ENCODE measurements at regions of chr9 and their contacts with region 1.

Region 1: DNA sequence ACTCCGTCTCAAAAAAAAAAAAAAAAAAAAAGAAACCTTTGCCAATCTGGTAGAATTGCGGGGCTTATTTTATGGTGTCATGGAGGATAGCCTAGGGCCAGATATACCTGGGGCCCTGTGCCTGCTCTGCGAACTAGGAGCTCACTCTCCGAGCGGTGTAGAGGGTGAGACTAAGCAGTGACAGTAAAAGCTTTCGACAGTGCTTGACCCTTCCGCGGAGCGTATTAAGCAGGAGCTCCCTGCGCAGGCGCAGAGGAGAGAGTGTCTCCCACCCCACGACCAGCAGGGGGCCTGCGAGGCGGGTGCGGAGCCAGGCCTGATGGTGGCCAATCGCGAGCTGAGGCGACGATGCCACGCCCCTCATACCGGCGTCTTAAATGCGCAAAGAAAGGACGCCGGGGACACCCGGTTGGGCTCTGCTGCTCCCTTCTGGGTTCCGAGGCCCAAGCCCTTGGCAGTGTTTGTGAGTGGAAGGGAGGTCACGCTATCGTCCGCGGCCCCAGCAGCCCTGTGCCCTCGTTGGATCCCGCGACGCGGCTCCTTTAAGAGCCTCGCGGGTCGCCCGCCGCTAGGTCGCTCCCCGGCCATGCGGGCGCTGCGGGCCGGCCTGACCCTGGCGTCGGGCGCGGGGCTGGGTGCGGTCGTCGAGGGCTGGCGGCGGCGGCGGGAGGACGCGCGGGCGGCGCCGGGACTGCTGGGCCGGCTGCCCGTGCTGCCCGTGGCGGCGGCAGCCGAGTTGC is at the start of gene ENDOG:
- DNase-seq: peak; percentile 98
- ATAC-seq: peak; percentile 98
- H3K4me3 Mint-ChIP-seq: peak within 1 kb of the TSS; percentile 76
- H3K27ac Mint-ChIP-seq: peak within 1 kb of the TSS; percentile 80
- H3K4me1 Mint-ChIP-seq: peaks cover 13% of the 10 kb centered on the region
- H3K27me3 Mint-ChIP-seq: no peaks in the 10 kb centered on the region
- total RNA-seq, gene ENDOG: 7.3 to 9.3 TPM

Region 2: DNA sequence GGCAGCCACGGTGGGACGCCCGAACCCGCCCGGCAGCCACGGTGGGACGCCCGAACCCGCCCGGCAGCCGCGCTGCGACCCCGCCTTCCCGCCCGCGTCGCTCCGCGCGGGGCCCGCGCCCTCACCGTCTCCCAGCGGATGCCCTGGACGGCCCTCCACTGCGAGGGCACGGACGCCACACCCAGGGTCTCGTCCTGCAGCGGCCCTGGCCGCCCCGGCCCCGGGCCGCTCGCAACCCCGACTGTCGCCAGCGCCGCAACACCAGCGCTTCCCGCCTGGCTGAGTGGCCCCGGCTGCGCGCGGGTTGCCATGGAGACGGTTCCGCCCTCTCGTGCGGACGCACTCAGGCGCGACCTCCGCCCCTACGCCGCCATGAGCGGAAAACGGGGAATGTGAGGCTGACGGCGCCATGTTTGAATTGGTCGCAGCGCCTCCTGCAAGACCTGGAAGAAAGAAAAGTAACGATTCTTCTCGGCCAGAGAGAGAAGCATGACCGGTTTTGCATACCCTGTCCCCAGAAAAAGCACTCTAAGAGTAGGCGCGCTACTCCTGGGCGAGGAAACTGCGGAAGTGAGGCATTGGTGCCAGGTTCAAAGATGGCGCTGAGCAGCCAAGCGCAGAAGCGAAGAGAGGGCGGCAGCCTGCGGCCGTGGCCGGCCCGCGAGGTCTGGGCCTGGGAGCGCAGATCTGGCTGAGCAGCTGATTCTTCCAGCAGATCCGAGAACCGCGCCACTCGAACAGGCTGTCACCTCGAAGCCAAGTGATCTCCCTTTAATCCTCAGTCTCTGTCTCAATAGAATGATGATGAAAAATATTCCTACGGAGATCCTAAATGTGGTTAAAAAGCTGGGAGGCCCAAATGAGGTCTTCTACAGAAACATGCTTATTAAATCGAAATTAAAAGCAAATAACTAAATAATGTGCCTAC is 161.6 kb before region 1 on chr9 and contains the start of gene DYNC2I2:
- CTCF ChIA-PET with region 1: no interaction called
- POLR2A ChIA-PET with region 1: no interaction called
- intact Hi-C with region 1: loop called in 1 of 2 experiments (anchors 2 kb)
- DNase-seq: peak; percentile 99
- ATAC-seq: peak; percentile 98
- H3K4me3 Mint-ChIP-seq: peak within 1 kb of the TSS; percentile 82
- H3K27ac Mint-ChIP-seq: peak within 1 kb of the TSS; percentile 100
- H3K4me1 Mint-ChIP-seq: peaks cover 6% of the 10 kb centered on the region
- H3K27me3 Mint-ChIP-seq: no peaks in the 10 kb centered on the region
- total RNA-seq, gene DYNC2I2: 26.7 to 35.7 TPM

Region 3: DNA sequence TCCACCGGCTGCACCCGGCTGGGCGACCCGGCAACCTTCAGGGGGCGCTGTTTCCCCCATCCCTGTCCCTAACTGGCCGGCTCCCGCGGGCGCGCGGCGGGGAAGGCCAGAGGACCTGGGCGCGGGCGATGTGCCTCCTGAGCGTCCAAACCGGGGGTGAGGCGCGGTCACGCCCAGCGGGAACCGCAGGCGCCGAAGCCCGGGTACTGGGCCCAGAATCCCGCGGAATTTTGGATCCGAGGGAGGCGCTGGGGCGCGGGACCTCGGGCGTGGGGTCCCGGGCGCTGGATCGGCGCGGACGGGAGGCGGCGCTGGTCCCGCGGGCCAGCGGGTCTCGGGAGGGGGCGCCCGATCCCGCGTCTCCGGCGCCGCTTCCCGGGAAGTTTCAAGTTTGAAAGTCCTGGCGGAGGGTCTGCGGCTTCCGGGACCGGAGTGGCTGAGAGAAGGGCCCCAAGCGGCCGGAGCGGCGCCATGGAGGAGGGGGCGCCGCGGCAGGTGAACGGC is 115.8 kb before region 1 on chr9 and contains the start of gene PKN3:
- CTCF ChIA-PET with region 1: interaction called, 7 read pairs
- POLR2A ChIA-PET with region 1: interaction called, 3 read pairs
- intact Hi-C with region 1: loop called in 1 of 2 experiments (anchors 1 kb)
- DNase-seq: peak; percentile 95
- ATAC-seq: peak; percentile 85
- H3K4me3 Mint-ChIP-seq: peak within 1 kb of the TSS; percentile 73
- H3K27ac Mint-ChIP-seq: peak within 1 kb of the TSS; percentile 74
- H3K4me1 Mint-ChIP-seq: peaks cover 10% of the 10 kb centered on the region
- H3K27me3 Mint-ChIP-seq: no peaks in the 10 kb centered on the region
- total RNA-seq, gene PKN3: 14.6 to 14.9 TPM

Region 4: DNA sequence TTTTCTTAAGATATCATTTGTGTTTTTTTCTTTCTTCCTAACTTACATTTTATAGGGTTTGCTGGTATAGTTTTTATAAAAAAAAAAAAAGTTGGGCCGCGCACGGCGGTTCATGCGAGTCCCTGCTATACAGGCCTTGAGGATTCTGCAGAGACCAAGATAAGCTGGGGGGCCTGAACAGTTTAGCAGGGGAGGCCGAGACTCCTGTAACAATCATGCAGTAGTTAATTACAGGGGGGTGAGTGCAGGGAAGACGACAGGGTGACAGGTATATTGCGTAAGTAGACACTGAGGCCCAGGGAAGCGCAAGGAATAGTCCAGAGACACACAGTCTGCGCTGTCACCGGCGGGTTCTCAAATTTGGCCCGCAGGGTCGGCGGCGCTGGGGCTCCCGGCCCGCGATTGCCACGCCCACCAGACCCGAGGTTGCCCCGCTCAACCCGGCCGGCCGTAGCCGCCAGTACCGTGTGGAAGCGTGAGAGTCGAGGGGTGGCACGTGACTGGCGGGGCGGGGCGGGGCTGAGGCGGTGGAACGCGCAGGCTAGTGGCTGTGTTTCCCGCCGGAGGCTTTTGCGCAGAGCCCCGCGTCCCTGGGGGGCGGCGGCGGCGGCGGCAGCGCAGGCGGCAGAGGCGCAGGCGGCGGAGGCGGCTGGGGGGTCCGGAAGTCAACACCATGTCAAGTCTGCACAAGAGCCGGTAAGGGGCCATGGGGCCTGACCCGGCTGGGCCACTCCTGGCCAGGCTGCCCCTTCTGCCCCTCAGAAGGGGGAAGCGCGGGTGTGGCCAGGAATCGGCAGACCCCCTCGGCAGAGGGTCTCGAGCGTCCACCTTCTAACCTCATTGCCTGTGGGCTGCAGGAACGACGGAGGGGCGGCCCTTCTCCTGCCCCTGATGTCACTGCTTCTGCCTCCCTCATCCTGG is 31.3 kb before region 1 on chr9 and contains the start of gene TBC1D13:
- CTCF ChIA-PET with region 1: interaction called, 10 read pairs
- POLR2A ChIA-PET with region 1: interaction called, 5 read pairs
- intact Hi-C with region 1: loop called in 1 of 2 experiments (anchors 1 kb)
- DNase-seq: peak; percentile 94
- ATAC-seq: peak; percentile 97
- H3K4me3 Mint-ChIP-seq: peak within 1 kb of the TSS; percentile 87
- H3K27ac Mint-ChIP-seq: peak within 1 kb of the TSS; percentile 87
- H3K4me1 Mint-ChIP-seq: peaks cover 18% of the 10 kb centered on the region
- H3K27me3 Mint-ChIP-seq: no peaks in the 10 kb centered on the region
- total RNA-seq, gene TBC1D13: 10.5 to 14.0 TPM

Region 5: GRCh38 chr9:128927731-128928411 is 109.6 kb after region 1 on chr9:
- CTCF ChIA-PET with region 1: interaction called, 7 read pairs
- POLR2A ChIA-PET with region 1: no interaction called
- intact Hi-C with region 1: loop called in 1 of 2 experiments (anchors 1 kb)
- DNase-seq: peak; percentile 73
- ATAC-seq: peak; percentile 81
- H3K4me3 Mint-ChIP-seq: no peak overlapping the region
- H3K27ac Mint-ChIP-seq: peak overlapping the region; percentile 6
- H3K4me1 Mint-ChIP-seq: peaks cover 9% of the 10 kb centered on the region
- H3K27me3 Mint-ChIP-seq: no peaks in the 10 kb centered on the region

Region 6: DNA sequence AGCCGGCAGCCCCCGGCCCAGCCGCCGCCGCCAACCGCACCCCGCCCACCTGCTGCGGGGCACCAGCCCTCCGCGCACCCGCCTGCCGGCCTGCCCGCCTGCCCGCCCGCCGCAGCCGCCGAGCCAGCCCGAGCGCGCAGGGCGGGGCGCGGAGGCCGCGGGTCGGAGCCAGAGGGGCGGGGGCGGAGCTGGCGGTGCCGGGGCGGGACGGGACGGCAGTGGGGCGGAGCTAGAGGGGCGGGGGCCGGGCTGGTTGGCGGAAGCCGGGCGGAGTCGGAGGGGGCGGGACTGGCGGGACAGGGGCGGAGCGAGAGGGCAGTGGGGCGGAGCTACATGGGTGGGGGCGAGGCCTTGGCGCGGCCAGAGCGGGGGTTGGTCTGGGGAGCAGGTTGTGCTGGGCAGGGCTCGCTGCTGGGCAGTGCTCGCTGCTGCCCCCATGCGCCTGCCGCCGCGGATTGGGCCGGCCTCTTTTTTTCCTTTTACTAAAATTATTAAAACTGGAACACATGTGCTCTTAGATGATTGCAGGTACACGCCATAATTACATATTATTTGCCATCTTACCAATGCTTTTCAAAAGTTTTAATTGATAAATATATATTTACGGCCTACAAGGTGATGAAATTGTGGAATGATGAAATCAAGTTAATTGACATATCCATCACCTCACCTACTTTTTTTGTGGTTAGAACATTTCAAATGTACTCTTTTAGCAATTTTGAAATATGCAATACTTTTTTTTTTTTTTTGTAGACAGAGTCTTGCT is 210.1 kb after region 1 on chr9 and contains the start of gene SH3GLB2:
- CTCF ChIA-PET with region 1: interaction called, 4 read pairs
- POLR2A ChIA-PET with region 1: no interaction called
- intact Hi-C with region 1: loop called in 1 of 2 experiments (anchors 1 kb)
- DNase-seq: peak; percentile 98
- ATAC-seq: peak; percentile 93
- H3K4me3 Mint-ChIP-seq: peak within 1 kb of the TSS; percentile 81
- H3K27ac Mint-ChIP-seq: peak within 1 kb of the TSS; percentile 52
- H3K4me1 Mint-ChIP-seq: peaks cover 17% of the 10 kb centered on the region
- H3K27me3 Mint-ChIP-seq: no peaks in the 10 kb centered on the region
- total RNA-seq, gene SH3GLB2: 49.1 to 53.7 TPM

Region 7: DNA sequence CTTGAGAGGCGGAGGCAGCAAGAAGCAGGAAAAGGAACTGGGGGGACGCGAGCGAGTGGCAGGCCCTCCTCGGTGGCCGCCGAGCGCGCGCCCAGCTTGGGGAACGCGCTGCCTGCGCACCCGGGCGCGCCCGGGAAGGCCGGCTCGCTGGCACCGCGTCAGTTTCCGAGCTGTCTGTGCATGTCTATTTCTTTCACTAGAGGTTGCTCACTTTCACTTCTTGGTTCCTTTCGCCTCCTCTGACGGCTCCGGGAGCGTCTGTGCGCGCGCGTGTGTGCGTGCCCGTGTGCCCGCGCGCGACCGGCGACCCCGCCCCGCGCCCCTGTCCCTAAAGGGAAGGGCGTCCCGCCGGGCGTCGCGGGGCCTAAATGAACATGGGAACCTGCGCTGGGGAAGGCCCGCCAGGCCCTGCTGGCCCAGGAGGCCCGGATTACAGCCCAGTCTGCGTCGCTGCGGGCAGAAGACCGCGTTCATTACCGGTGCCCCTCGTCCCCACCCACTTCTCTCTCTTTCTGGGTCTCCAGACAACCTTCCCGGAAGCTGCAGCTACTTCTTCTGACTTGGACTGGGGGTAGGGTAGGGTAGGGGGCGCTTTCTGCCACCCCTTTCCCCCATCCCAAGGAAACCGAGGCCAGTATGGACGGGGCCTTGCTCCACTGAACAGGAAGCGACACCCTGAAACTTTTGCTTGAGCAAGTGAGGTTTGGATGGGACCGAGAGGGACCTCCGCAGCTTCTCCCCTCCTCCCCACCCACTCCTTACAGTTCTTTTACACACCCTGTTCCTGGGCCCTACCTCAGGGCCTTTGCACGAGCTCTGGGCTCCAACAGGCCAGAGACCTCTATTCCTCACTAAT is 565.5 kb after region 1 on chr9:
- CTCF ChIA-PET with region 1: no interaction called
- POLR2A ChIA-PET with region 1: no interaction called
- intact Hi-C with region 1: no loop called
- DNase-seq: peak; percentile 83
- ATAC-seq: peak; percentile 96
- H3K4me3 Mint-ChIP-seq: peak overlapping the region; percentile 59
- H3K27ac Mint-ChIP-seq: peak overlapping the region; percentile 58
- H3K4me1 Mint-ChIP-seq: peaks cover 8% of the 10 kb centered on the region
- H3K27me3 Mint-ChIP-seq: no peaks in the 10 kb centered on the region

Region 8: DNA sequence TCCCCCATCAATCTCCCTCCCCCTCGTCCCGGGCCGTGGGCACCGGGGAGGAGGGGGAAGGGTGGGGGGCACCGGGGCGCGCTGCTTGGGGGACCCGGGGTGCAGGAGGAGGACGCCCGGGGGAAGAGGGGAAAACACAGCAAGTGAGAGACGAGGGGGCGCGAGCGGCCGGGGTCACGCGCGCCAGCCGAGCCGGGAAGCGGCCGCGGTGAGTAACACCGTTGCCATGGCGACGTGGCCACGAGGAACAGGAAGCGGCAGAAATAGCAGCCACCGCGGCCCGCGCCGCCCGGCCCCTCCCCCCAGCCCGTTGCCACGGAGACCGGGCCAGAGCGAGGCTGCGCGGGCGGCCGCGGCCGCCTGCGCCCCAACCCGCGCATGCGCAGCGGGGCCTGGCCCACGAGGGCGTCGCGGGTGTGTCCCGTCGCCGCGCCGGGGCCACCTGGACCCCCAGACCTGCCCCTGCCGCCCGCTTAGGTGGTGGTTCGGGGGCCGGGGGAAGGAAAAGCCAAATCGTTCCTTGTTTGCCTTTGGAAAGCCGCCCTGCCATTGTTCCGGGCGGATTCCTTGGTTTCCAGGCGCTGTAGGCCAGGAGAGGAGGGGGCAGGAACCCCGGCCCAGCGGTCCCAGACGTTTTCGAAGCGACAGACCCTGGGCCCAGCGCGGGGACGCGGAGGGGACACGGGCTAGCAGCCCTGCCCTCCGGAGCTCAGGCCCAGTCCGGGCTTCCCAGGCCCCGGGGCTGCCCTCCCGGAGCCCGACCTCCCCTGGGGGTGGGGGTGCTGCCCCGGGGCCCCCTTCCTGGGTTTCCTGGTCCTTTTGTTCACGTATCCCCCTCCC is 595.5 kb after region 1 on chr9:
- CTCF ChIA-PET with region 1: no interaction called
- POLR2A ChIA-PET with region 1: no interaction called
- intact Hi-C with region 1: loop called in 1 of 2 experiments (anchors 1 kb)
- DNase-seq: peak; percentile 99
- ATAC-seq: peak; percentile 89
- H3K4me3 Mint-ChIP-seq: peak overlapping the region; percentile 75
- H3K27ac Mint-ChIP-seq: peak overlapping the region; percentile 94
- H3K4me1 Mint-ChIP-seq: peaks cover 23% of the 10 kb centered on the region
- H3K27me3 Mint-ChIP-seq: no peaks in the 10 kb centered on the region

Measured in activated CD4-positive, alpha-beta T cell treated with anti-CD3 and anti-CD28 coated beads for 36 hours (primary cell).